OCI-LY7 (cell line): ENCODE measurements at regions of chr4 and their contacts with region 1.

Region 1: DNA sequence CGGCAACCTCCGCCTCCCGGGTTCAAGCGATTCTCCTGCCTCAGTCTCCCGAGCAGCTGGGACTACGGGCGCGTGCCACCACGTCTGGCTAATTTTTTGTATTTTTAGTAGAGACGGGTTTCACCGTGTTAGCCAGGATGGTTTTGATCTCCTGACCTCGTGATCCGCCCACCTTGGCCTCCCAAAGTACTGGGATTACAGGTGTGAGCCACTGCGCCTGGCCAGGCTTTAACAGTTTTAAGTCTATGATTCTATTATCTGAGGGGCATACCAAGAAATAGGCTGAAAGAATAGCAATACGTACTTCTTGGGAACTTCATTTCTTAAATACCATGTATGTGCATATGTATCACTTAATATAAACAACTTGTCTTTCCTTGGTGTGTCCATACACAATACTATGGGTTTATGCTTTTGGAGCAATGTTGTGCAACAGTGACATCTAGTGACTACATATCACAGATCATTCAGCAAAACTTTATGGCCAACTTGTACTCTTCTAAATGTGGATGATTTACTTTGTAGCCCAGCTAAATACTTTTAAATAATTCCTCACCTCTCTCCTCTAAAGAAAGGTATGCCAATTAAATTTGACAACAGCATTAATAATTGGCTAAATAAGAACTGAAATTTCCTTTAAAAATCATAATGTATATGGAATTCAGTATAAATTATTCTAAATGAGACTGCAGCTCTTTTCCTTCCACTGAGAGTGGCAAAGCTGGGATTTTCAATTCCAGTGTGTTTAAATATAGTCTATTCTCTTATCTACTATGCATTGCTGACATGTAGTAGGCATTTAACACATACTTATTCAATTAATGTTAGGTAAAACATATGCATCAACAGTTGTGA is 10.4 kb downstream of the SLC9B1 start:
- DNase-seq: peak; percentile 75
- H3K4me3 ChIP-seq: no peak overlapping the region
- H3K27ac ChIP-seq: no peak overlapping the region
- H3K4me1 ChIP-seq: no peaks in the 10 kb centered on the region
- CTCF ChIP-seq: peak; percentile 91

Region 2: GRCh38 chr4:102449751-102450352 is 559.2 kb before region 1 on chr4:
- CTCF ChIA-PET with region 1: no interaction called
- POLR2A ChIA-PET with region 1: no interaction called
- intact Hi-C with region 1: loop called (anchors 1 kb)
- DNase-seq: peak; percentile 68
- H3K4me3 ChIP-seq: no peak overlapping the region
- H3K27ac ChIP-seq: no peak overlapping the region
- H3K4me1 ChIP-seq: no peaks in the 10 kb centered on the region
- CTCF ChIP-seq: peak; percentile 87